Calu3 (cell line): ENCODE measurements at regions of chr16 and their contacts with region 1.

Region 1: DNA sequence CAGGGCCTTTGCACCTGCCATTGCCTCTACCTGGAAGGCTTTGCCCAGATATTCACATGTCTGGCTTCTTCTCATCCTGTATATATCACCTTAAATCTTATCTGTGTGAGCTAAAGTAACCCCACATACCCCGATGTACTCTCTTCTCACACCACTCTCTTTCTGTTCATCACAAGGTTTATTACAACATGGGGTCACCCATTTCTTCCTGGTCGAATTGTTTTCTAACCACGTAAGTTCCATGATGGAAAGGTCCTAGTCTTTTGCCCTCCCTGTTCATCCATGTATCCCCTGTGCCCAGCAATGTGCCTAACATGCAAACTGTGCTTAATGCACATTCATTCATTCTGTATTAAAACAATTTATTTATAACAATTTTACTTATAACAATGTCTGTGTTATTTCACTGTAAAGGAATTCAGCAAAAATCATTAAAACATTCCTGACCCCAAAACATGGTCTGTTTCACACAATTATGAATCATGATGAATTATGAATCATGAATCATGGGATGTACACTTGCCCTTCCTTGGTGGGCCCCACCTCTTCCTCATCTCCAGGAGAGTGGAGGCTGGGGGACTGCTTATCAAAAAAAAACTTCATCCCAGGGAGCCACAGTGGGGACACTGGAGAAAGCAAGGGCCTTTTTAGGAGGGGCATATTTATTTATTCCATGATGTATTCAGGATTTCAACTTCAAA is 336.4 kb downstream of the GRIN2A start:
- DNase-seq: peak; percentile 72
- H3K4me3 Mint-ChIP-seq: peak overlapping the region; percentile 48
- H3K27ac Mint-ChIP-seq: peak overlapping the region; percentile 99
- H3K4me1 Mint-ChIP-seq: peaks cover 51% of the 10 kb centered on the region
- H3K27me3 Mint-ChIP-seq: no peaks in the 10 kb centered on the region
- CTCF ChIP-seq: no peak

Region 2: GRCh38 chr16:9033125-9033830 is 812.5 kb before region 1 on chr16:
- CTCF ChIA-PET with region 1: interaction called, 11 read pairs
- intact Hi-C with region 1: no loop called
- DNase-seq: peak; percentile 54
- H3K4me3 Mint-ChIP-seq: no peak overlapping the region
- H3K27ac Mint-ChIP-seq: no peak overlapping the region
- H3K4me1 Mint-ChIP-seq: no peaks in the 10 kb centered on the region
- H3K27me3 Mint-ChIP-seq: no peaks in the 10 kb centered on the region
- CTCF ChIP-seq: peak; percentile 52

Region 3: DNA sequence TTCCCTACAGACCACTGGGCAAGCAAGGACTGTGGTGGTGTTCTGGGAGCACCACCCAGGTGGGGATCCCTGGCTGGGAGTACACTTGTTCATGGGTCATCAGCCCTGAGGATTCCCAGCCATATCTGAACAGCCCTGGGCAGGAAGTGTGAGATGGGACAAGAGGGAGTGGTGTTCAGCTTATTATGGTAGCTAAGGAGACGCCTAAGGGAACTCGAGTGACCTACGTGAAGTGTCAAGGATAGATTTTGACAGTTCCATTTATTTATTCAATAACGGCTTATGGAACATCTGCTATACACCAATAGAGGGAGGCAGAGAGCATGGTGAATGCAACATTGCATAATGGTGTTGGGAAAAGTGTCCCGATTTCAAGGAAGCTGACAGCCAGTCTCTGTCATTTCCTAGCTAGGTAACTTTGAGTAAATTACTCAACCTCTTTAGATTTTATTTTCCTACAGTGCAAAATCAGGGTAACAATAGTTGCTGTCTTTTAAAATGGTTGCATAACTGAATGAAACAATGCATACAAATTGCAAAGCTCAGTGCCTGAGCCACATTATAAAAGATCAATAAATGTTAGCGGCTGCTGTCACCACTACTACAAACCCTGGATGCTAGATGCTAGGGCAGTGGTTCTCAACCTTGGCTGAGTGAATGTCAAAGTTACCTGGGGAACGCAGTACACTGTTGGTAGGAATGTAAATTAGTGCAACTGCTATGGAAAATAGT is 197.7 kb before region 1 on chr16:
- CTCF ChIA-PET with region 1: interaction called, 8 read pairs
- intact Hi-C with region 1: loop called (anchors 5 kb)
- DNase-seq: peak; percentile 53
- H3K4me3 Mint-ChIP-seq: no peak overlapping the region
- H3K27ac Mint-ChIP-seq: no peak overlapping the region
- H3K4me1 Mint-ChIP-seq: peaks cover 22% of the 10 kb centered on the region
- H3K27me3 Mint-ChIP-seq: no peaks in the 10 kb centered on the region
- CTCF ChIP-seq: peak; percentile 77

Region 4: GRCh38 chr16:9797306-9797705 is 48.5 kb before region 1 on chr16:
- CTCF ChIA-PET with region 1: interaction called, 3 read pairs
- intact Hi-C with region 1: loop called (anchors 2 kb)
- DNase-seq: peak; percentile 80
- H3K4me3 Mint-ChIP-seq: peak overlapping the region; percentile 46
- H3K27ac Mint-ChIP-seq: peak overlapping the region; percentile 93
- H3K4me1 Mint-ChIP-seq: peaks cover 28% of the 10 kb centered on the region
- H3K27me3 Mint-ChIP-seq: no peaks in the 10 kb centered on the region
- CTCF ChIP-seq: no peak

Region 5: DNA sequence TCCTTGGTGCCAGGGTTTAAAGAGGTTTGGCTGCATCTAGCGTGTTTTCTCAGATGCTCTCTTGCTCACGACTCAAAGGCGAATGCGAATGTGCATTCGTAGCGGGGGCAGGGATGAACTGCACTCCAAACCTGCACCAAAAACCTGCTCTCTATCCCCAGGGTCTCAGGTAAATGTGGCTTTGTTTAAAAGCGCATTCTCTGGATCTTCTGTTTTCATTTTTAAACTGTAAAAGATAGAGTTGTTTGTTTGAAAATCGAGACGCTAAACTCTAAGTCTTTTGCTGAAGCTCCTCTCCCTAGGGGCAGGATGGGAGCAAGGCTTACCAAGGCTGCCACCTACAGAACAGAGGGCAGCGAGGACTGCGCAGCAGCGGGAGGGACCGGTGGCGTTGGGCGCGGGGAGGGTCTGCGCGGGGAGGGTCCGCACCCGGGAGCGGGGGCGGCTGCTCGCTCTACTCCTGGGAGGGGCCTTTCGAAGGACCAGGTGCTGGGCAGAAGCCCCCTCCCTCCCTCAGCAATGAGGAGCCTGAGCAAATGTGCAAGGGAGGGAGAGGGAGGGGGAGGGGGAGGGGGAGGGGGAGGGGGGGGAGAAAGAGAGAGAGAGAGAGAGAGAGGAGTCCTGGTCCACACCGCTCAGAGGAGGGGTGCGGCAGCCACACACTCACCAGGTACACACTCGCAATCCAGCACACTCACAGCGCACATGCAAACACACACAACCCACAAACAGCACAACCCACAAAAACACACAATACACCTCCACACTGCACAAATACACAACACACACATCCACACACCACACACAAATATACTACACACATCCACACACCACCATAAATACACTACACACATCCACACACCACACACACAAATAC is 193.6 kb after region 1 on chr16:
- CTCF ChIA-PET with region 1: no interaction called
- intact Hi-C with region 1: loop called (anchors 10 kb)
- DNase-seq: no peak
- H3K4me3 Mint-ChIP-seq: no peak overlapping the region
- H3K27ac Mint-ChIP-seq: no peak overlapping the region
- H3K4me1 Mint-ChIP-seq: peaks cover 30% of the 10 kb centered on the region
- H3K27me3 Mint-ChIP-seq: no peaks in the 10 kb centered on the region
- CTCF ChIP-seq: no peak

Region 6: GRCh38 chr16:10080036-10080772 is 234.4 kb after region 1 on chr16:
- CTCF ChIA-PET with region 1: interaction called, 3 read pairs
- intact Hi-C with region 1: loop called (anchors 2 kb)
- DNase-seq: peak; percentile 81
- H3K4me3 Mint-ChIP-seq: peak overlapping the region; percentile 54
- H3K27ac Mint-ChIP-seq: peak overlapping the region; percentile 94
- H3K4me1 Mint-ChIP-seq: peaks cover 88% of the 10 kb centered on the region
- H3K27me3 Mint-ChIP-seq: no peaks in the 10 kb centered on the region
- CTCF ChIP-seq: no peak

Region 7: DNA sequence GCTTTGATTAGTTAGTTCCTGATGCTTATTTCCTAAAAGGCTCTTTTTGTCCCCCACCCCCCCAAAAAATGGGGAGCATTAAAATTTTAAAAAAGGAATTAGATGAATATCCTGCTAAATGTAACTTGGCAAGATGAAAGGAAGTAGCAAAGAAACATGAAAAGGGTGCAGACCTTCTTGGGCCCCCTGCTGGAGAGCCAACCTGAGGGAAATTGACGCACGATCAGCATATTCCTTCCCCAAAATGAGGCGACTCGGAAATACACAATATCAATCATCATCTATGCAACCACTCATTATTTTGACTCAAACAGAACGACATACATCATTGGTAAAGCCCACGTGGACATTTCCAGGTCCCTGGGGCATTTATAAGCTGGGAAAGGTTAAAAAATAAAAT is 276.7 kb after region 1 on chr16:
- CTCF ChIA-PET with region 1: interaction called, 6 read pairs
- intact Hi-C with region 1: loop called (anchors 2 kb)
- DNase-seq: peak; percentile 72
- H3K4me3 Mint-ChIP-seq: peak overlapping the region; percentile 46
- H3K27ac Mint-ChIP-seq: peak overlapping the region; percentile 83
- H3K4me1 Mint-ChIP-seq: peaks cover 68% of the 10 kb centered on the region
- H3K27me3 Mint-ChIP-seq: no peaks in the 10 kb centered on the region
- CTCF ChIP-seq: peak; percentile 69

Region 8: DNA sequence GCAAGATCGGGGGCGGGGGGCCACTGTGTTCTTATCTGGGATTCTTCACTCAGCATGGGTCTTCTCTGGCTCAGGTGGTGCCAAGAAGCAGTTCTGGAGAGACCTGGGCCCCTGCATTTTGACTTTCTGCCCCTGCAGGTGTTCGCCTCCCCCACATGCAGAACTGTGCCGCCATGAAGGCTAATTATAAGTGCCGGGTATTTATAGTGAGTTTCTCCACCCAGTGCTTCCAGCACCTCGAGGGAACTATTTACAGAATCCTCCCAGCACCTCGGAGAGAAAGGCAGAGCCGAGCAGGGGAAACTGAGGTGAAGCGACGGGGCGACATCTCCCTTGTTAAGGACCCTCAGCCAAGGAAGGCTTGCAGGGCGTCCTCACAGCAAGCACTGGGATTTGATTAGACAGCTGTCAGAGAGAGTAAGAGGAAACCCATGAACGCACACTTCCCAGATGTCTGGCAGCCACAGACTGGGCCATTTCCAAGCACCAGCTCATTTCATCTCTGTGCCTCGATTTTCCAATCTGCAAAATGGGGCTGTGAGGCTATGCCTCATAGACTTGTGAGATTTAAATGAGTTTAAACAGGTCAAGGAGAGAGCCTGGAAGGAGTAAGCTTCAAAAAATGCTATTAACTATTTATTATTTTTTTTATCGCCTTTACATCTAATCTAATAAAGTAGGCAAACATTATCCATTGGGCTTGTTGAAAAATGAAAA is 372.8 kb after region 1 on chr16:
- CTCF ChIA-PET with region 1: no interaction called
- intact Hi-C with region 1: no loop called
- DNase-seq: no peak
- H3K4me3 Mint-ChIP-seq: no peak overlapping the region
- H3K27ac Mint-ChIP-seq: no peak overlapping the region
- H3K4me1 Mint-ChIP-seq: no peaks in the 10 kb centered on the region
- H3K27me3 Mint-ChIP-seq: peaks cover 43% of the 10 kb centered on the region
- CTCF ChIP-seq: no peak